ENCODE measurements at regions of chr2 and their contacts with region 1.

Region 1: DNA sequence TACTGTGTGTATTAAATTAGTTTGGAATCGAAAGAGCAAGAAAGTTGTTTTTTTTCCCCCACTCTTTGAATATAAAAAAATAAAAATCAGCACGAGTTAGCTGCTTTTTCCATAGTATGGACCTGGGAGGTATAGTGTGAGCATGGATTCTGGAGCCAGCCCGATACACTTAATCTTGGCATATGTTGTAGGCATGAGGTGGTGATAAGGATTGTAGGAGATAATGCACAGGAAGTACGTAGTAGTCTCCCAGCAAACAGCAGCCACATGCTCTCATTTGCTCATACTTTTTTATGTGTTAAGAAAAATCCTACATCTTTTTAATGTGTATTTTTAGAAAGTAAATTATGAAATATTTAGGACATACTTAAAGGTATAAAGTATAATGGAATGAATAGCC is 2.1 kb upstream of the DNAJC27 start:
- DNase-seq: no peak
- ATAC-seq: no peak
- H3K4me3 ChIP-seq: no peak overlapping the region
- H3K4me1 ChIP-seq: peaks cover 4% of the 10 kb centered on the region
- CTCF ChIP-seq: no peak

Region 2: DNA sequence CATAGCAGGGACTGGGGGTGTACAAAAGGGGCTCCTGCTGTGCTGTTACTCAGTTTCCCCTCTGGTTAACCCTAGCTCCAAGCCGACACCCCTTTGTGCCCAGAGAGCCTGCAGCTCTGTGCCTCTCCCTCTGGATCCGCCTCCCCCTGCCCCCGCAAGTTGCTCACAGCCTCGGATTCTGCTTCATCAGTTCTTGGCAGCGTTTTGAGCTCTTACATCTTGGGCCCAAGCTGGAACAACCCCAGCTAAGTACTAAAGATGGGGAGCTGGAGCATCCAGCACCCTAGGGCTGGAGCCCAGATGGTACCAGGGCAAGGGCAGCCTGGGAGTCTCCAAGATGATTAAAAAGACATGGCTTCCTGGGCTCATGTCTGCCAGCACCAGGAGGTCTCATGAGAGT is 153.8 kb after region 1 on chr2:
- intact Hi-C with region 1: loop called (anchors 2 to 5 kb)
- DNase-seq: no peak
- ATAC-seq: no peak
- H3K4me3 ChIP-seq: no peak overlapping the region
- H3K4me1 ChIP-seq: peaks cover 7% of the 10 kb centered on the region
- CTCF ChIP-seq: no peak

Measured in mucosa of descending colon (tissue), 3 donors.